ENCODE measurements at regions of chr1 and their contacts with region 1.

Region 1: GRCh38 chr1:246566128-246566812 is at the starts of genes CNST and TFB2M:
- DNase-seq: peak; percentile 100
- ATAC-seq: peak; percentile 88
- H3K4me3 ChIP-seq: peak within 1 kb of the TSS; percentile 88
- H3K27ac ChIP-seq: peak within 1 kb of the TSS; percentile 68
- H3K4me1 ChIP-seq: peaks cover 31% of the 10 kb centered on the region
- H3K27me3 ChIP-seq: no peaks in the 10 kb centered on the region
- CTCF ChIP-seq: no peak
- total RNA-seq, gene CNST: 13.5 and 15.0 TPM in 2 replicates
- total RNA-seq, gene TFB2M: 30.7 and 47.0 TPM in 2 replicates

Region 2: DNA sequence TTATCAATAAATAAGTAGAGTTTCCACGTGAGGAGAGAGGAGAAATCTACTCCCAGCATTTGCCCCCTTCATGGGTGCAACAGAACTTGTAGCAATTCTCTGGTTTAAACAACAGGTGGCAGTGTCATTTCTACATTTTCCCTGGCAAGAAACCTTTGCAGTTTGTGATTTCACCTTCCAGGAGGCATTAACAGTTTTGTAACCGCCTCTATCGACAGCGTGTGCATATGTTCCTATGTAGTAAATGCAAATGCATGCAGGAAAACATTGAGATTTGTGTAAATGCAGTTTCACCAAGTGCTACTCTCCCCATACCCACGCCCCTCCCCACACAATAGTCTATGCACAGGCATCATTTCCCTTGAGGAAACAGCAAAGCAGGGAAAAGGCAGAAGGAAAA is 553.9 kb before region 1 on chr1:
- CTCF ChIA-PET with region 1: no interaction called
- POLR2A ChIA-PET with region 1: interaction called, 23 read pairs
- intact Hi-C with region 1: no loop called
- DNase-seq: peak; percentile 66
- ATAC-seq: peak; percentile 49
- H3K4me3 ChIP-seq: no peak overlapping the region
- H3K27ac ChIP-seq: no peak overlapping the region
- H3K4me1 ChIP-seq: no peaks in the 10 kb centered on the region
- H3K27me3 ChIP-seq: no peaks in the 10 kb centered on the region
- CTCF ChIP-seq: peak; percentile 85

Region 3: DNA sequence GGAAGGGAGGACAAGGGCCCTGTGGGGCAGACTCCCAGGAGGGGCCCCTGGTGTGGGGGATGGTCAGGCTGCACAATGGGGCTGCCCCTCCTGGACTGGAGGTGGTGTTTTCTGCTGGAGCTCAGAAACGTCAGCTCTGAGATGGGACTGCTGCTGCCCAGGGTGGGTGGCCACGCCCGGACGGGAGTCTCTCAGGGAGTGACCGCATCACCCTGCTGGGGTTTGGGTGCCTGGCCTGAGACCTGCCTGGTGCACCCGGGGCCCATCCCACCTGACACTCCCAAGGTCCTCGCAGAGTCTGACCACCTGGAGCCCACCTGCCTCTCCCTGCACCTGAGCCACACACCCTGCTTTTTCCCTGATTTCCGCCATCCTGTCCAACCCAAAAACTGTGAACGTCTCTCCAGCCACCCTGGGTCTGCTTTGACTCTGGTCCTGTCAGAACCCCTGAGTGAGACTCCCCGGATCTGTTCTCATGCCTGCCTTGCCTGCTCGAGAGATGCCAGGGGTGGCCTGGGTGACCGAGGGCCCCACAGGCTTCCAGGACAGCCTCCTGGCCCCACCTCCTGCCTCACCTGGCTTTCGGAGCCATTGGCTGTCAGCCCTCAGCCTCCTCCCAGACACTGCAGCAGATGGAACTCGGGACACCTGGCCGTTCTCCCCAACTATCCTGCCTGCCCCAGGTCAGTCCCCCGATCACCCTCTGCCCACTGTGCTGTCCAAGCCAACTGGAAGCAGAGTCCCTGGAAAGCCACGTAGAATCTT is 47.6 kb before region 1 on chr1:
- CTCF ChIA-PET with region 1: no interaction called
- POLR2A ChIA-PET with region 1: no interaction called
- intact Hi-C with region 1: no loop called
- DNase-seq: no peak
- ATAC-seq: no peak
- H3K4me3 ChIP-seq: no peak overlapping the region
- H3K27ac ChIP-seq: no peak overlapping the region
- H3K4me1 ChIP-seq: no peaks in the 10 kb centered on the region
- H3K27me3 ChIP-seq: no peaks in the 10 kb centered on the region
- CTCF ChIP-seq: no peak

Region 4: DNA sequence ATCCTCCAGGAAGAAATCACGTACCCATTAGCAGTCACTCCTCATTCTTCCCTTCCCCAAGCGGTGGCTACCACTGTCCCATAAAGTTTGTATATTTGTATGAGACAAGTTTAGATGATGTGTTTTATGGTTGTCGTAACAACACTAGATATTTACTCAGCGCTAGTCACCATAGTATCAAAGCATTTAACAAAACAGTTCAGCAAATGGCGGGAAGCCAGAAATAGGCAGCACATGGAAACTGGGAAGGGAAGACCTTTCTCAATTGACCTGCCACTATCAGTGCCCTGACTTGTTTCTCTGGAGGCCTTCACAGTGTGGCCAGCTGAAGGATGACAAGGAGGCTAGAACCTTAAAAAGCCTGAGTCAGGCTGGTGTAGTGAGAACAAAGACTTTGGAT is 31.1 kb after region 1 on chr1:
- CTCF ChIA-PET with region 1: no interaction called
- POLR2A ChIA-PET with region 1: no interaction called
- intact Hi-C with region 1: loop called (anchors 1 kb)
- DNase-seq: peak; percentile 98
- ATAC-seq: peak; percentile 99
- H3K4me3 ChIP-seq: 0 out of 2 replicates have a peak overlapping the region, but pooled peaks have one; percentile 2
- H3K27ac ChIP-seq: peak overlapping the region; percentile 79
- H3K4me1 ChIP-seq: peaks cover 18% of the 10 kb centered on the region
- H3K27me3 ChIP-seq: no peaks in the 10 kb centered on the region
- CTCF ChIP-seq: no peak

Region 5: GRCh38 chr1:246617768-246618167 is 51.5 kb after region 1 on chr1:
- CTCF ChIA-PET with region 1: no interaction called
- POLR2A ChIA-PET with region 1: no interaction called
- intact Hi-C with region 1: loop called (anchors 2 kb)
- DNase-seq: no peak
- ATAC-seq: 0 out of 2 replicates have a peak, but pooled peaks have one; percentile 11
- H3K4me3 ChIP-seq: no peak overlapping the region
- H3K27ac ChIP-seq: peak overlapping the region; percentile 27
- H3K4me1 ChIP-seq: peaks cover 18% of the 10 kb centered on the region
- H3K27me3 ChIP-seq: no peaks in the 10 kb centered on the region
- CTCF ChIP-seq: no peak

Region 6: GRCh38 chr1:246753670-246754535 is 187.6 kb after region 1 on chr1:
- CTCF ChIA-PET with region 1: no interaction called
- POLR2A ChIA-PET with region 1: no interaction called
- intact Hi-C with region 1: loop called (anchors 10 kb)
- DNase-seq: peak; percentile 81
- ATAC-seq: peak; percentile 95
- H3K4me3 ChIP-seq: no peak overlapping the region
- H3K27ac ChIP-seq: no peak overlapping the region
- H3K4me1 ChIP-seq: no peaks in the 10 kb centered on the region
- H3K27me3 ChIP-seq: no peaks in the 10 kb centered on the region
- CTCF ChIP-seq: peak; percentile 94

Region 7: GRCh38 chr1:247769603-247770002 is 1203.3 kb after region 1 on chr1:
- CTCF ChIA-PET with region 1: no interaction called
- POLR2A ChIA-PET with region 1: no interaction called
- intact Hi-C with region 1: no loop called
- DNase-seq: no peak
- ATAC-seq: no peak
- H3K4me3 ChIP-seq: no peak overlapping the region
- H3K27ac ChIP-seq: no peak overlapping the region
- H3K4me1 ChIP-seq: no peaks in the 10 kb centered on the region
- H3K27me3 ChIP-seq: 0 out of 2 replicates have a peak, but pooled peaks cover 4% of the 10 kb centered on the region
- CTCF ChIP-seq: no peak

Measured in PC-3 (cell line).